Stomach (tissue), 19 donors: ENCODE measurements at regions of chr18 and their contacts with region 1.

Region 1: DNA sequence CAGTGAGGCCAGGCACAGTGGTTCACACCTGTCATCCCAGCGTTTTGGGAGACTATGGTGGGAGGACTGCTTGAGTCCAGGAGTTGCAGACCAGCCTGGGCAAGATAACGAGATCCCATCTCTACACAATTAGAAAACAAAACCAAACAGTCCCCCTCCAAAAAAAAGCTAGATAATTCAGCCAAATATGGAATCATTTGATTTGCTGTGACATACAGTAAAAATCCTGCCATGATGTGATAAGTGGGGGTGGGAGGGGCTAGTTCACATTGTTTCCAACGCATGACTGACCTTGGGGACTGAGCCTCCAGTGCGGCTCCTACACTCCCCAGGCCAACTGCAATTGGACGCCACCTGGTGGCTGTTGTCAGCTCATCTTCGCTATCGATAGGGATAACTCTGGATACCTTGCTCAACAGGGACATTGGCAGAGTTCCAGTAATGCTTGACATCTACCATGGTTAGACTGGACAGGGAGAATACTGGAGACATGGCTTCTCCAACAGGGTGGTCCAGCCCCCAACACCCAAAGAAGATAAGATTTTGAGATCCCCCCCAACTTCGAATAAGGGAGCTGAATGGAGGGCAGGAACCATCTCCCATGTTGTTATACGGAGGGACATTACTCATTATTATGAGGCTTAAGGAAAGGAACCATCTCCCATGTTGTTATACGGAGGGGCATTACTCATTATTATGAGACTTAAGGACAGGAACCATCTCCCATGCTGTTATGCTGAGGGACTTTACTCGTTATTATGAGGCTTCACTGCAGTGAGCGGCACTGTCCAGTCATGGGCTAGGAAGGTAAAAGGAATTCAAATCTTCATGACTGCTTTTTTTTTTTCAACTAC is 135.9 kb downstream of the TGIF1 start:
- DNase-seq: peak; percentile 88 to 92
- H3K4me3 ChIP-seq: no peak overlapping the region
- H3K27ac ChIP-seq: peak overlapping the region in 1 of 5 donors; percentile 17
- H3K4me1 ChIP-seq: peaks cover 0 to 11% (median 6%) of the 10 kb centered on the region in 4 donors
- H3K27me3 ChIP-seq: no peaks in the 10 kb centered on the region
- CTCF ChIP-seq: peak in 5 of 7 experiments; percentile 61 to 86 (median 76)
- EP300 ChIP-seq: no peak
- POLR2A ChIP-seq: no peak

Region 2: DNA sequence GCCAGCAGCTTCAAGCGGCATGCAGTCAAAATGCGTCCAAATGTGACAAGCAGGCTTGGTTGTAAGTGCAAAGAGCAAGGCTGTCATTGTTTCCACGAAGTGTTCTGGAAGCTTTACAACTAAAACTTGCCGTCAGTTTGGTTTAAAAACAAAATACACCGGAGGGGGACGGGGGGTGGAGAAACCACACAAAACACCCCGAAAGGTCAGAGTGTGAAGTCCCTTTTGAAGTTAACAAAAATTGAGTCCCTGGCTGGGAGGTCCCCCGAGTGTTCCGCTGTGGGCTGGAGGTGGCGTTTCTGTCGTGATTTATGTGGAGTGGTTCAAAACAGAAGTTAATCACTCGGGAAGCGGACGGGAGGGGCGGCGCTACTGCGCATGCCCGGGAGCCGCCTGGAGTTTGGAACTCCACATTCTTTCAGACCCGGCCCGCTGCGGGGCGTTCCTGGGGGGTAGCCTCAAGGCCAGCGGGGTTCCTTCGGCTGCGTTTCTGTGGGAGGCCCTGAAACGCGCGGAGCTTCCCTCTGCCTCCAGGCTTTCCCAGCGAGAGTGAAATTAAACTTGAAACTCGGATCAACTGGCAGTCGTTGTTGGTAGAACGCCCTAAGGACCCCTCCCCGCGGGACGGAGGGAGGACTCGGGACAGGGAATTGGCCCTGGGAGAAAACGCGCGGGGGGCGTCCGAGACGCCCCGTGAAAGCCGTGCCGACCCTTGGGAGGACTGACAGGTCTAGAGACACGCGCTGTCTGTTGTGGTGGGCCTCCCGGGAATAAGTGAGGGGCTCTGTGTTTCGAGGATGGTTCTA is 134.5 kb before region 1 on chr18:
- intact Hi-C with region 1: loop called (anchors 10 kb)
- DNase-seq: peak; percentile 94 to 97
- H3K4me3 ChIP-seq: peak overlapping the region; percentile 69 to 86 (median 78)
- H3K27ac ChIP-seq: peak overlapping the region; percentile 94 to 99 (median 99)
- H3K4me1 ChIP-seq: peaks cover 31 to 53% (median 40%) of the 10 kb centered on the region in 4 donors
- H3K27me3 ChIP-seq: no peaks in the 10 kb centered on the region
- CTCF ChIP-seq: no peak
- EP300 ChIP-seq: no peak
- POLR2A ChIP-seq: peak in 2 of 4 donors; percentile 81 to 86